Activated CD8-positive, alpha-beta T cell treated with anti-CD3 and anti-CD28 coated beads, Interleukin-2, amount 10 ng/mL, durations not matched to agents 7 days and 5 days (primary cell): ENCODE measurements at regions of chr1 and their contacts with region 1.

Region 1: GRCh38 chr1:109802901-109803561 is 39.3 kb upstream of the EPS8L3 start:
- DNase-seq: no peak
- ATAC-seq: peak; percentile 2
- H3K4me3 Mint-ChIP-seq: peak overlapping the region; percentile 63
- H3K27ac Mint-ChIP-seq: peak overlapping the region; percentile 95
- H3K4me1 Mint-ChIP-seq: peaks cover 90% of the 10 kb centered on the region
- H3K27me3 Mint-ChIP-seq: no peaks in the 10 kb centered on the region

Region 2: GRCh38 chr1:109910123-109910962 is 107.3 kb after region 1 on chr1 and contains the start of gene CSF1:
- CTCF ChIA-PET with region 1: interaction called, 9 read pairs
- POLR2A ChIA-PET with region 1: interaction called, 14 read pairs
- DNase-seq: peak; percentile 79
- ATAC-seq: peak; percentile 54
- H3K4me3 Mint-ChIP-seq: peak within 1 kb of the TSS; percentile 92
- H3K27ac Mint-ChIP-seq: peak within 1 kb of the TSS; percentile 95
- H3K4me1 Mint-ChIP-seq: peaks cover 83% of the 10 kb centered on the region
- H3K27me3 Mint-ChIP-seq: no peaks in the 10 kb centered on the region
- total RNA-seq, gene CSF1: 40.3 to 41.1 TPM